CD4-positive, alpha-beta T cell (primary cell): ENCODE measurements at regions of chr17 and their contacts with region 1.

Region 1: DNA sequence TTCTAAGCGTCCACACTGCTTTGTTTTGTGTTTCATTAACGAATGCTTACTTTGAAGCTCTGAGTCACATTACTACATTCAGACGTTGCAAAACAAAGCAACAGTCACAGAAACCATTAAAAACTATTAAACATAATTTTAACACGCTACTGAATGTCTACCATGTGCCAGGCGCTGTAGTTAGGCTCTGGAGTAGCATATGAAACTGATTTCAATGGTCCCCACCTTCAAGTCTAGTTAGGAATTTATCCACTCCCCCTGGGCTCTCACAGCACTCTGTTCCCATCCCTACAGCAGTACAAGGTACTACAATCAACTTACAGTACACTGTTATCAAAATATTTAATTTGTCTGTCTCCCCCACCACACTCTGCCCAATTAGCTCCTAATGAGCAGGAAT is 631 bp downstream of the UTP6 start:
- DNase-seq: no peak
- ATAC-seq: no peak
- H3K4me3 ChIP-seq: peak overlapping the region; percentile 89
- H3K4me3 Mint-ChIP-seq: no peak overlapping the region
- H3K27ac ChIP-seq: peak overlapping the region; percentile 46 to 68
- H3K27ac Mint-ChIP-seq: no peak overlapping the region
- H3K4me1 ChIP-seq: peaks cover 17% of the 10 kb centered on the region
- H3K4me1 Mint-ChIP-seq: peaks cover 9% of the 10 kb centered on the region
- H3K27me3 ChIP-seq: no peaks in the 10 kb centered on the region
- H3K27me3 Mint-ChIP-seq: no peaks in the 10 kb centered on the region
- CTCF ChIP-seq: no peak

Region 2: DNA sequence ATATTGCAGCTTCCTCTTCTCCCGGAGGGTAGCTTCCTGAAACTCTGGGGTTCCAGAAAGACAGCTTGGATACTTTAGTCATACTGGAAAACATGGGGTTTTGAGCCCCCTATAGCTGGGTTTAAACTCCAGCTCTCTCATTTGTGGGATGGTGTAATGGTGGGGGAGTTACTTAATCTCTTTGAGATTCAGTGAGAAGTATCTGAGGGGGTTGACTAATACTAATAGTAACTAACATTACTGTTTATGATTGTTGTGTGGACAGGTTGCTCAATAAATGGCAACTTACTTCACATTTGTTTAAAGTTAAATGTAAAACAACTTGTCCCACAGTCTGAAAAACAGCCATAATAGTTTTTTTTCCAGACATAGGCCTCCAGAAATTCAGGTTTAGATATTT is 30.9 kb after region 1 on chr17:
- CTCF ChIA-PET with region 1: interaction called, 8 read pairs
- POLR2A ChIA-PET with region 1: no interaction called
- intact Hi-C with region 1: loop called in 1 of 2 experiments (anchors 2 kb)
- DNase-seq: no peak
- ATAC-seq: no peak
- H3K4me3 ChIP-seq: no peak overlapping the region
- H3K4me3 Mint-ChIP-seq: no peak overlapping the region
- H3K27ac ChIP-seq: no peak overlapping the region
- H3K27ac Mint-ChIP-seq: no peak overlapping the region
- H3K4me1 ChIP-seq: peaks cover 6% of the 10 kb centered on the region
- H3K4me1 Mint-ChIP-seq: no peaks in the 10 kb centered on the region
- H3K27me3 ChIP-seq: no peaks in the 10 kb centered on the region
- H3K27me3 Mint-ChIP-seq: no peaks in the 10 kb centered on the region
- CTCF ChIP-seq: no peak

Region 3: GRCh38 chr17:32349854-32350665 is 449.2 kb after region 1 on chr17 and contains the start of gene ZNF207:
- CTCF ChIA-PET with region 1: no interaction called
- POLR2A ChIA-PET with region 1: interaction called, 3 read pairs
- intact Hi-C with region 1: loop called in 1 of 2 experiments (anchors 2 kb)
- DNase-seq: peak; percentile 90 to 98 (median 93)
- ATAC-seq: peak; percentile 97
- H3K4me3 ChIP-seq: peak within 1 kb of the TSS; percentile 91
- H3K4me3 Mint-ChIP-seq: peak within 1 kb of the TSS; percentile 95
- H3K27ac ChIP-seq: peak within 1 kb of the TSS; percentile 98 to 99
- H3K27ac Mint-ChIP-seq: peak within 1 kb of the TSS; percentile 95
- H3K4me1 ChIP-seq: peaks cover 44% of the 10 kb centered on the region
- H3K4me1 Mint-ChIP-seq: peaks cover 41% of the 10 kb centered on the region
- H3K27me3 ChIP-seq: no peaks in the 10 kb centered on the region
- H3K27me3 Mint-ChIP-seq: no peaks in the 10 kb centered on the region
- CTCF ChIP-seq: no peak
- total RNA-seq, gene ZNF207: 252 to 262 TPM